Endothelial cell of umbilical vein (primary cell): ENCODE measurements at regions of chr2 and their contacts with region 1.

Region 1: GRCh38 chr2:54455563-54456361 is at the start of gene SPTBN1:
- DNase-seq: peak; percentile 88
- H3K4me3 ChIP-seq: peak within 1 kb of the TSS; percentile 60 to 87 (median 77)
- H3K27ac ChIP-seq: peak within 1 kb of the TSS; percentile 57
- H3K4me1 ChIP-seq: peaks cover 28% of the 10 kb centered on the region
- H3K27me3 ChIP-seq: no peaks in the 10 kb centered on the region
- CTCF ChIP-seq: no peak
- POLR2A ChIP-seq: peak; percentile 76
- total RNA-seq, gene SPTBN1: 320 and 328 TPM in 2 replicates

Region 2: GRCh38 chr2:54115284-54116137 is 340.3 kb before region 1 on chr2 and contains the start of gene ACYP2:
- CTCF ChIA-PET with region 1: no interaction called
- POLR2A ChIA-PET with region 1: no interaction called
- dilution Hi-C with region 1: no loop called
- intact Hi-C with region 1: loop called (anchors 2 kb)
- DNase-seq: peak; percentile 92
- H3K4me3 ChIP-seq: peak within 1 kb of the TSS; percentile 53 to 91 (median 74)
- H3K27ac ChIP-seq: peak within 1 kb of the TSS; percentile 93
- H3K4me1 ChIP-seq: peaks cover 6% of the 10 kb centered on the region
- H3K27me3 ChIP-seq: no peaks in the 10 kb centered on the region
- CTCF ChIP-seq: peak in 1 of 2 donors; percentile 25
- POLR2A ChIP-seq: no peak
- total RNA-seq, gene ACYP2: 5.8 and 7.9 TPM in 2 replicates

Region 3: DNA sequence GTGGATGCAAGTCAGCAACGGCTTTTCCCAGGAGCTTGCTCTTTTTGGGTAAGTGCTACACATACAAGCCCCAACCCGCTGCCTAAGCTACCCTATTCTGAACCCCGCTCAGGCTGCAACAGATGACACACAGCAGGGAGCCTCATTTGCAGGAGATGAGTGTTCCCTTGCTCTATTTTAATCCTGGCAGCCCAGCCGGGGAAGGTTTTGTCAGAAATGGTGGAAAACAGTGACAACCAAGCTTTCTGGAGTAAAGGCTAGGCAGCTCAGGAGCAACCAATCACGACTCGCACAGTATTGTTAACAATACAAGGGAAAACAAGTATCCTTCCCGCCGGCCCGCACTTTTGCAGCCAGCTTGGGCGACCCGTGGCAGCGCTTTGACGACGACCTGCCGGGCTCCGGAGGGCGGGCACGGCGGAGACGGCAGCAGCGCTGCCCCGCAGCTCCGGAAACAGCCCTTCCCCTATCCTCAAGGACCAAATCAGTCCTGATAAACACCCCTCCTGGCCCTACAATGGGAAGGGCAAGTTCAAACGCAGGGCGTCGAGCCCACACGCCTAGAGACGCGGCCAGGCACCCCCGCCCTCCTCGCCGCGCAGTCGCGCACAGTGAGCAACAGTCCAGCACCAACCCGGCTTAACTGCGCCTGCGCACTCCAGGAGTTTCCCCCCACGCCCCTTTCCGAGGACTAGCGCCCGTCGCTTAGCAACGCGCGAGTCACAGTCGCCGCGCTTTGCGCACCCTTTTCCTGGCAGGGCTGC is 125.4 kb before region 1 on chr2:
- CTCF ChIA-PET with region 1: interaction called, 3 read pairs
- POLR2A ChIA-PET with region 1: interaction called, 4 read pairs
- dilution Hi-C with region 1: no loop called
- intact Hi-C with region 1: loop called (anchors 1 kb)
- DNase-seq: peak; percentile 97
- H3K4me3 ChIP-seq: peak overlapping the region; percentile 7 to 54 (median 44)
- H3K27ac ChIP-seq: peak overlapping the region; percentile 23
- H3K4me1 ChIP-seq: peaks cover 16% of the 10 kb centered on the region
- H3K27me3 ChIP-seq: no peaks in the 10 kb centered on the region
- CTCF ChIP-seq: no peak
- POLR2A ChIP-seq: peak; percentile 80

Region 4: DNA sequence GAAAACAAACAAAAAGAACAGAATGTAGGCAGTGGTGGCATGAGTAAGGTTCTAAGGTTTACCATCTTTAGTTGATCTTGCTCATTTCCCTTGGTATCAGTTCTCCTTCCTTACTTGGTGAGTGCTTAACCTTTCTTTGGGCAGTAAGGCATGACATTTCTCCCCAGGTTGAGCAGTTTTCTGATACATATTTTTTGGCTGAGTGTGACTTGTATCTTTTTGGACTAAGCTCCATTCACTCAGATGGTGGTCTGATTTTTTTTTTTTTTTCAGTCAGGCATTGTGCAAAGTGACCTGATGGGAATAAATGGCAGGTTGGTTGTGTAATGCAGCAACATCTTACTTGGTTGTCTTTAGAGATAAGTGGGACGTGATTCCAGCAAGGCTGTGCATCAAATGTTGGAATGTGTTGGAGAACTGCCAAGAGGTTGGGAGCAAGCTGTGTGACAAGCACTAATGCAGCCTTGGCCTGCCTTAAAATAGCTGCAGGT is 15.5 kb after region 1 on chr2:
- CTCF ChIA-PET with region 1: no interaction called
- POLR2A ChIA-PET with region 1: no interaction called
- dilution Hi-C with region 1: no loop called
- intact Hi-C with region 1: loop called (anchors 2 kb)
- DNase-seq: peak; percentile 65
- H3K4me3 ChIP-seq: no peak overlapping the region
- H3K27ac ChIP-seq: peak overlapping the region; percentile 45
- H3K4me1 ChIP-seq: peaks cover 33% of the 10 kb centered on the region
- H3K27me3 ChIP-seq: no peaks in the 10 kb centered on the region
- CTCF ChIP-seq: no peak
- POLR2A ChIP-seq: no peak

Region 5: DNA sequence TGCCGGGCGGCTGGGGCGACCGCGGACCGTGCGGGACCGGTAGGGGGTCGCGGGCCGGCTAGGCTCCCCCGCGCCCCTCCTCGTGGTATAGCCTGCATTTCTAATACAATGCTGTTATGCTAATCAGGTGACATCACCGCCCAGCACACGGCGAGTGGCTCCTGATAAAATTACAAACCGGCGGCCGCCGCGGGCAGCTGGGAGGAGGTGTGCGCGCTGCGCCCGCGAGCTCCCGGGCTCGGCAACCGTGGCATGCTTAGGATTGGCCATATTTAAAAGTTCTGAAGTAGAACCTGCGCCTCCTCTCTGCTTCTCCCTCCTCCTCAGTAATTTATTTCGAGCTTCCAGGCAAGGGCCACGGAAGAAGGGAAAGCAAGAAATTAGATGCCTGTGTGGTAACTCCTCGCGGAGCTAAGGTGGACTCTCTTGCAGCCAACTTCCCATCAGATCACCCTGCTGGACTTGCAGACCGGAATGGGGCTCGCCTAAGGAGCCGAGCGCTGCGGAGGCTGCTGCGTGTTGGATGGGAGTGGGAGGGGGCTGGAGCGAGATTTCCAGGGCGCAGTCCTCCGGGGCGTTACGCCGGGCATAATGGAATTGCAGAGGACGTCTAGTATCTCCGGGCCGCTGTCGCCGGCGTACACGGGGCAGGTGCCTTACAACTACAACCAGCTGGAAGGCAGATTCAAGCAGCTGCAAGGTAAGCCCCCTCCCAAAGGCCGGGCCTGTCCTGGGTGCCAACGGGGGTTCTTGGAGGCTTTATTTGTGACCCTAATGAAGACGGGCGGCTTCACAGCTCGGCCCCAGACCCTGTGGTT is 102.6 kb after region 1 on chr2:
- CTCF ChIA-PET with region 1: no interaction called
- POLR2A ChIA-PET with region 1: no interaction called
- dilution Hi-C with region 1: no loop called
- intact Hi-C with region 1: loop called (anchors 1 kb)
- DNase-seq: peak; percentile 86
- H3K4me3 ChIP-seq: peak overlapping the region; percentile 50 to 99 (median 99)
- H3K27ac ChIP-seq: peak overlapping the region; percentile 99
- H3K4me1 ChIP-seq: peaks cover 42% of the 10 kb centered on the region
- H3K27me3 ChIP-seq: no peaks in the 10 kb centered on the region
- CTCF ChIP-seq: no peak
- POLR2A ChIP-seq: peak; percentile 53

Region 6: DNA sequence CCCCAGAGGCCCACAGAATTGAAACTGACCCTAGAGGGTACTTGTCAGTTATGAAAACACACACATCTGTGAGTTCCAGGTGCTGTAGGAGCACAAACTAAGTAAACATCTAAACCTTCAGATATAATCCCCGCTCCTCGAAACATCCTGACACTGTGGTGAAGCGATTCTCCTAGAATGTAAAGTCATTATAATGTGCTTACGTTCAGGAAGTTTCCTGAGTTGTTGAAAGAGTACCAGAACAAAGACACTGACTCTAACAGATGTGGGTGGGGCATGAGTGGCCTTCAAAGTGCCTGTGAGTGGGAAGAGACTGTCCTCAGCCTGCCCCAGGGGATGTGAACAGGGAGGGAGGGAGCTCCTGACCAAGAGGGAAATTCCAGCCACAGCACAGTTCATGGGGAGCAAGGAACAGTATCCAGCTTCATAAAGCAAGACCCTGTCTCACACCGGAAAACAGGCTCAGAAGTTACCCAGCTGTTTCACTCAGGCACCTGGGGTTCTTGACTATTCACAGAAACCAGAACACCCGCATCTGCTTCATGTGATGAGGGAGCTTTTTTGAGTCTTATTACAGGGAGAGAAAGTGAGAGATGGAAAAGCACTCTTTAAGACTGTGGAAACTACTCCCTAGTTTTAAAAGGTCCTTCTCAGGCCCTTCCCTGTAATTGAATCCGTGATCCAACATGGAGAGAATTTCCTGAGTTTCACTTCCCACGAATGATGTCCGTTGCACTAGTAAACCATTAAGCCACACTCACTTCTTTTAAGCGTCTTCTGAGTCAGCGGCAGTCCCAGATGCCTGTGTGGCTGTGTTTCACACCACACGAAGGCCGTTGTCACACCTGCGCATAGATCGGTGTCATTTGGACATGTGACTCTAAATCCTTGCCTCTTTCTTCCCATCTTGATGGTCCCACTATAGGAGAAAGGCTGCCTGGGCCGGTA is 179.1 kb after region 1 on chr2:
- CTCF ChIA-PET with region 1: no interaction called
- POLR2A ChIA-PET with region 1: interaction called, 8 read pairs
- dilution Hi-C with region 1: no loop called
- intact Hi-C with region 1: loop called (anchors 5 kb)
- DNase-seq: peak; percentile 92
- H3K4me3 ChIP-seq: no peak overlapping the region
- H3K27ac ChIP-seq: peak overlapping the region; percentile 91
- H3K4me1 ChIP-seq: peaks cover 37% of the 10 kb centered on the region
- H3K27me3 ChIP-seq: no peaks in the 10 kb centered on the region
- CTCF ChIP-seq: no peak
- POLR2A ChIP-seq: no peak